Activated naive CD4-positive, alpha-beta T cell treated with anti-CD3 and anti-CD28 coated beads for 36 hours (primary cell): ENCODE measurements at regions of chr7 and their contacts with region 1.

Region 1: GRCh38 chr7:2477447-2478398 is 1.5 kb upstream of the GRIFIN start:
- DNase-seq: peak; percentile 68
- H3K4me3 Mint-ChIP-seq: no peak overlapping the region
- H3K27ac Mint-ChIP-seq: no peak overlapping the region
- H3K4me1 Mint-ChIP-seq: no peaks in the 10 kb centered on the region
- H3K27me3 Mint-ChIP-seq: no peaks in the 10 kb centered on the region

Region 2: GRCh38 chr7:2325162-2325561 is 152.6 kb before region 1 on chr7:
- CTCF ChIA-PET with region 1: no interaction called
- intact Hi-C with region 1: no loop called
- DNase-seq: no peak
- H3K4me3 Mint-ChIP-seq: no peak overlapping the region
- H3K27ac Mint-ChIP-seq: no peak overlapping the region
- H3K4me1 Mint-ChIP-seq: no peaks in the 10 kb centered on the region
- H3K27me3 Mint-ChIP-seq: no peaks in the 10 kb centered on the region

Region 3: GRCh38 chr7:2567679-2568278 is 90.1 kb after region 1 on chr7:
- CTCF ChIA-PET with region 1: interaction called, 4 read pairs
- intact Hi-C with region 1: loop called (anchors 1 kb)
- DNase-seq: no peak
- H3K4me3 Mint-ChIP-seq: no peak overlapping the region
- H3K27ac Mint-ChIP-seq: no peak overlapping the region
- H3K4me1 Mint-ChIP-seq: peaks cover 8% of the 10 kb centered on the region
- H3K27me3 Mint-ChIP-seq: no peaks in the 10 kb centered on the region